Breast epithelium (tissue), 4 donors: ENCODE measurements at regions of chr1 and their contacts with region 1.

Region 1: DNA sequence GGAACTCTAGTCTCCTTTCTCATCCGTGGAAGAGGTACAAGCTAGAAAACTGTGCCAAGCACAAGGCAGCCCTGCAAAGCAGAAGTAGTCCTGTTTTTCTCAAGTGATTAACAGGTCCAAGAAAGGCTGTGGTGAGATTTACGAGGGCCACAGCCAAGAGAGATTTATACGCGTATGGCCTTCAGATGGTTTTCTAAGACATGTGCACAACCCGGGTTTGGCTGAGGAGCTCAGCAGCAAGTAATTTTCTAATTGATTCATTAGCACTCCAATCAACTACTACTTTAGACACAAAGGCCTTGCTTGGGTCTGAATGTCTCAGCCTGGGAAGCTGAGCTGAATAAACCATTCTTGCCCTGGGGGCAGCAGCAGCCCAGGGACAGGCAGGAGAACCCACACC is 55.8 kb downstream of the SSBP3 start:
- DNase-seq: no peak
- H3K4me3 ChIP-seq: no peak overlapping the region
- H3K27ac ChIP-seq: peak overlapping the region in 1 of 2 donors; percentile 15
- H3K4me1 ChIP-seq: peaks cover 0 to 3% of the 10 kb centered on the region in 2 donors
- H3K27me3 ChIP-seq: no peaks in the 10 kb centered on the region
- CTCF ChIP-seq: no peak
- POLR2A ChIP-seq: no peak

Region 2: GRCh38 chr1:52913537-52913936 is 1436.8 kb before region 1 on chr1:
- intact Hi-C with region 1: loop called (anchors 5 kb)
- DNase-seq: no peak
- H3K4me3 ChIP-seq: no peak overlapping the region
- H3K27ac ChIP-seq: no peak overlapping the region
- H3K4me1 ChIP-seq: no peaks in the 10 kb centered on the region
- H3K27me3 ChIP-seq: no peaks in the 10 kb centered on the region
- CTCF ChIP-seq: no peak
- POLR2A ChIP-seq: no peak

Region 3: GRCh38 chr1:53562291-53562980 is 787.9 kb before region 1 on chr1:
- intact Hi-C with region 1: no loop called
- DNase-seq: peak in 1 of 2 donors; percentile 34
- H3K4me3 ChIP-seq: no peak overlapping the region
- H3K27ac ChIP-seq: no peak overlapping the region
- H3K4me1 ChIP-seq: no peaks in the 10 kb centered on the region
- H3K27me3 ChIP-seq: peaks cover 0 to 6% of the 10 kb centered on the region in 2 donors
- CTCF ChIP-seq: no peak
- POLR2A ChIP-seq: no peak